GM12878 (cell line): ENCODE measurements at regions of chr1 and their contacts with region 1.

Region 1: GRCh38 chr1:6794164-6794563 is 8.9 kb downstream of the CAMTA1 start:
- DNase-seq: no peak
- ATAC-seq: no peak
- H3K4me3 ChIP-seq: no peak overlapping the region
- H3K27ac ChIP-seq: no peak overlapping the region
- H3K4me1 ChIP-seq: no peaks in the 10 kb centered on the region
- H3K27me3 ChIP-seq: no peaks in the 10 kb centered on the region
- CTCF ChIP-seq: peak; percentile 13 to 62 (median 36); a peak in 3 of 6 replicates
- EP300 ChIP-seq: no peak
- POLR2A ChIP-seq: no peak
- RAD21 ChIP-seq: peak; percentile 65

Region 2: GRCh38 chr1:6770751-6771440 is 23.3 kb before region 1 on chr1:
- CTCF ChIA-PET with region 1: no interaction called
- POLR2A ChIA-PET with region 1: no interaction called
- RAD21 ChIA-PET with region 1: no interaction called
- SMC1A ChIA-PET with region 1: no interaction called
- in situ Hi-C with region 1: no loop called
- intact Hi-C with region 1: no loop called
- DNase-seq: no peak
- ATAC-seq: peak; percentile 92
- H3K4me3 ChIP-seq: no peak overlapping the region
- H3K27ac ChIP-seq: no peak overlapping the region
- H3K4me1 ChIP-seq: peaks cover 7% of the 10 kb centered on the region; the same call in 1 of the 2 replicates
- H3K27me3 ChIP-seq: no peaks in the 10 kb centered on the region
- CTCF ChIP-seq: no peak
- EP300 ChIP-seq: no peak
- POLR2A ChIP-seq: no peak
- RAD21 ChIP-seq: no peak

Region 3: GRCh38 chr1:6868660-6869380 is 74.7 kb after region 1 on chr1:
- CTCF ChIA-PET with region 1: interaction called, 12 read pairs
- POLR2A ChIA-PET with region 1: no interaction called
- RAD21 ChIA-PET with region 1: interaction called, 3 read pairs
- SMC1A ChIA-PET with region 1: interaction called, 5 read pairs
- in situ Hi-C with region 1: no loop called
- intact Hi-C with region 1: no loop called
- DNase-seq: no peak
- ATAC-seq: peak; percentile 93
- H3K4me3 ChIP-seq: no peak overlapping the region; the same call in 1 of the 2 replicates
- H3K27ac ChIP-seq: peak overlapping the region; percentile 9; the same call in 1 of the 2 replicates
- H3K4me1 ChIP-seq: peaks cover 16% of the 10 kb centered on the region
- H3K27me3 ChIP-seq: no peaks in the 10 kb centered on the region
- CTCF ChIP-seq: no peak
- EP300 ChIP-seq: no peak
- POLR2A ChIP-seq: no peak
- RAD21 ChIP-seq: no peak

Region 4: GRCh38 chr1:6922096-6922931 is 128.2 kb after region 1 on chr1:
- CTCF ChIA-PET with region 1: no interaction called
- POLR2A ChIA-PET with region 1: no interaction called
- RAD21 ChIA-PET with region 1: no interaction called
- SMC1A ChIA-PET with region 1: no interaction called
- in situ Hi-C with region 1: no loop called
- intact Hi-C with region 1: no loop called
- DNase-seq: no peak
- ATAC-seq: no peak
- H3K4me3 ChIP-seq: no peak overlapping the region
- H3K27ac ChIP-seq: no peak overlapping the region
- H3K4me1 ChIP-seq: no peaks in the 10 kb centered on the region
- H3K27me3 ChIP-seq: no peaks in the 10 kb centered on the region; a peak in 1 of 4 replicates
- CTCF ChIP-seq: no peak
- EP300 ChIP-seq: no peak
- POLR2A ChIP-seq: no peak
- RAD21 ChIP-seq: no peak

Region 5: GRCh38 chr1:7070389-7071029 is 276.3 kb after region 1 on chr1:
- CTCF ChIA-PET with region 1: interaction called, 6 read pairs
- POLR2A ChIA-PET with region 1: no interaction called
- RAD21 ChIA-PET with region 1: interaction called, 4 read pairs
- SMC1A ChIA-PET with region 1: interaction called, 5 read pairs
- in situ Hi-C with region 1: loop called (anchors 5 kb)
- intact Hi-C with region 1: loop called (anchors 1 kb)
- DNase-seq: peak; percentile 3
- ATAC-seq: peak; percentile 92
- H3K4me3 ChIP-seq: no peak overlapping the region
- H3K27ac ChIP-seq: no peak overlapping the region
- H3K4me1 ChIP-seq: no peaks in the 10 kb centered on the region
- H3K27me3 ChIP-seq: peaks cover 0 to 3% of the 10 kb centered on the region in 2 experiments; a peak in 1 of 4 replicates
- CTCF ChIP-seq: peak; percentile 83 to 93 (median 88)
- EP300 ChIP-seq: no peak
- POLR2A ChIP-seq: no peak
- RAD21 ChIP-seq: peak; percentile 83

Region 6: DNA sequence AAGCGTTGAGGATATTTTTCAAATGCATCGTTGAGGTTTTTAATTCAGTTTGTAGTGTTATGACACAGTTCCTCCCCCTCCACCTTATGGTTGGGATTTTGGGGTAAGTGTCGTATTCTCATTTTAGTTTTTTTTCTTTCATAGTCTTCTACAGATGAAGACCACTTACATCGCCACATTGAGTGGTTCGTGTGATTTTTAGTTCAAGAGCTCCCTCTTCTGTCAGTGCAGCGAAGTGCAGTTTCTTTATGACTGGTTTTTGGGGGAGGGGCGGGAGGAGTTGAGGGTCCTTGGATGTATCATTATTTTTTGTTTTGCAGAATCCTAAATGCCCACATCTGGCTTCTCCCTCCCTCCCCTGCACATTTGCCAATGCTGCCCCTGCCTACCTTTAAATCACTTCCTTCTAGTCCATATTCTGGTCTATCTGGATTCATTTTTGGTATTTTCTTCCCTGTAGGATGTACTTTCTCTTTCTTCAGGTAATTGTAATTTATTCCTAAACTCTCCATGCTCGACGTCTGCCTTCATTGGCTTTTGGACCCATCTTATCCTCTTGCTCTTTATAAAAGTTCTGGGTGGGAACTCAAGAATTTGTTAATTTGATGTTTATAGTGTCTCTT is 424.2 kb after region 1 on chr1:
- CTCF ChIA-PET with region 1: no interaction called
- POLR2A ChIA-PET with region 1: no interaction called
- RAD21 ChIA-PET with region 1: no interaction called
- SMC1A ChIA-PET with region 1: no interaction called
- in situ Hi-C with region 1: no loop called
- intact Hi-C with region 1: loop called (anchors 5 kb)
- DNase-seq: no peak
- ATAC-seq: no peak
- H3K4me3 ChIP-seq: no peak overlapping the region
- H3K27ac ChIP-seq: no peak overlapping the region
- H3K4me1 ChIP-seq: no peaks in the 10 kb centered on the region
- H3K27me3 ChIP-seq: no peaks in the 10 kb centered on the region
- CTCF ChIP-seq: peak; percentile 66 to 67 (median 67)
- EP300 ChIP-seq: no peak
- POLR2A ChIP-seq: no peak
- RAD21 ChIP-seq: peak; percentile 75

Region 7: DNA sequence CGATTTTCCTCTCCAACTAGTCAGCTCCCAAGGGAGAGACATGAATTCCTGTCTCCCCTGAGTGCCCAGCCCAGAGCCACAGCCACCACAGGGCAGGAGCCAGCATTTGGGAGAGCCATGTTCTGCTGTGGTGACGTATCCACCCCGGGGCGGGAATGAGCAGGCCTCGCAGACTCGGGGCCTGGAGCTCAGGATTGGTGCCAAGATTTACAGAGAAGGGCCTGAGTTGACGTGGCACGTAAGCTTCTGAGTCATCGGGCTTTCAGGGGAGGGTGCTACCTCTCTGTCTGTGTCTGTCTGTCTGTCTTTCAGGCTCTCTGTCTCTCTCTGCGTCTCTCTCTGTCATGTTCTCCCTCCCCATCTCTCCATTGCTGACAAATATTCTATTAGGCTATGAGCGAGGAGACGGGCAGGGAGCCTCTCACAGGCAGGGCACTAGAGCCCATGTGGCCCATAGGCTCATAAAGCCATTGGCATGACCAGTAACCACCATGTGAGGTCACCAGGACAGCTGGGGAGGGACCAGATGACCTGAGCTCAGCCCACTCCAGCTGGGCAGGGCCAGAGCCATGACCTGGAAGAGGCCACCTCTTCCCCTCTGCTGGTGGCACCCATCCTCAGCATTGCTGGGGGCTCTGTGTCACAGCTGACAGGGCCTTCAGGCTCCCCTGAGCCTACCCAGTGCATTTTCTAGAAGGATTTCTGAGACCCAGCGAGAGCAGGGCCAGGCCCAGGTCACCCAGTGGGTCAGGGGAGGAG is 676.9 kb after region 1 on chr1:
- CTCF ChIA-PET with region 1: no interaction called
- POLR2A ChIA-PET with region 1: no interaction called
- RAD21 ChIA-PET with region 1: no interaction called
- SMC1A ChIA-PET with region 1: no interaction called
- in situ Hi-C with region 1: no loop called
- intact Hi-C with region 1: no loop called
- DNase-seq: peak; percentile 23
- ATAC-seq: peak; percentile 83
- H3K4me3 ChIP-seq: no peak overlapping the region
- H3K27ac ChIP-seq: no peak overlapping the region
- H3K4me1 ChIP-seq: peaks cover 10% of the 10 kb centered on the region
- H3K27me3 ChIP-seq: no peaks in the 10 kb centered on the region; a peak in 1 of 4 replicates
- CTCF ChIP-seq: no peak
- EP300 ChIP-seq: no peak
- POLR2A ChIP-seq: no peak
- RAD21 ChIP-seq: no peak